ENCODE measurements at regions of chr3 and their contacts with region 1.

Region 1: DNA sequence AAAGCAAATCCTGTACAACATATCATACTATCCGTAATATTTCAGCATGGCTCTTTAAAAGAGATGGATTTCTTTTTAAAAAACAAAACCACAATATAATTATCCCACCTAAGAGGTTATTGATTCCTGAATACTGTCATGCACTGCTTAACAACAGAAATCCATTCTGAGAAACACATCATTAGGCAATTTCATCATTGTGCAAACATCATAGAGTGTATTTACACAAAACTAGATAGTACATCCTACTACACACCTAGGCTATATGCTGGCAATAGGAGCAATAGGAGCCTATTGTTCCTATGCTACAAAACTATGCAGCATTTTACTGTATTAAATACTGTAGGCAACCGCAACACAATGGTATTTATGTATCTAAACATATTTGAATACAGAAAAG is 242.0 kb downstream of the NEK10 start:
- DNase-seq: no peak
- H3K4me3 ChIP-seq: no peak overlapping the region
- H3K27ac ChIP-seq: no peak overlapping the region
- H3K4me1 ChIP-seq: no peaks in the 10 kb centered on the region
- H3K27me3 ChIP-seq: no peaks in the 10 kb centered on the region
- CTCF ChIP-seq: no peak
- POLR2A ChIP-seq: no peak

Region 2: DNA sequence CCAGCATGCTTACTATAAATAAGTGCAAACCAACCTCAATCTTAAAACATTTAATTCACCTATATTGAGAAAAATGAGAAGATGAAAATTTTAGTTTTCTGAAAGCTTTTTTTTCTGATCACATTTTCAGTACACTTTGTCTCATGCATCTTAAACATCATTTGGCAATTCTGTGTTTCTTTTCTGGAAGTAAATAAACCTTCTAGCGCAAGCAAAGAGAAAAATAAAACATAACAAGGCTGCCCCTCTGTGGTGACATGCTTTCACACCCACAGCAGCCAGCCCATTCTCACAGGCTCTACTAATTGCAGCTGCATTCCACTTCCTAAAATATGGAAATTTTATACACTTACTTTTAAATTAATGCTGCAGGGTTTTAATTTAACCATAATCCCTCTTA is 151.9 kb after region 1 on chr3:
- intact Hi-C with region 1: loop called in 1 of 2 experiments (anchors 5 kb)
- DNase-seq: no peak
- H3K4me3 ChIP-seq: no peak overlapping the region
- H3K27ac ChIP-seq: no peak overlapping the region
- H3K4me1 ChIP-seq: no peaks in the 10 kb centered on the region
- H3K27me3 ChIP-seq: no peaks in the 10 kb centered on the region
- CTCF ChIP-seq: peak in 2 of 6 experiments; percentile 22 to 32
- POLR2A ChIP-seq: no peak

Measured in adrenal gland (tissue), 19 donors.